Endothelial cell of umbilical vein (primary cell): ENCODE measurements at regions of chr17 and their contacts with region 1.

Region 1: DNA sequence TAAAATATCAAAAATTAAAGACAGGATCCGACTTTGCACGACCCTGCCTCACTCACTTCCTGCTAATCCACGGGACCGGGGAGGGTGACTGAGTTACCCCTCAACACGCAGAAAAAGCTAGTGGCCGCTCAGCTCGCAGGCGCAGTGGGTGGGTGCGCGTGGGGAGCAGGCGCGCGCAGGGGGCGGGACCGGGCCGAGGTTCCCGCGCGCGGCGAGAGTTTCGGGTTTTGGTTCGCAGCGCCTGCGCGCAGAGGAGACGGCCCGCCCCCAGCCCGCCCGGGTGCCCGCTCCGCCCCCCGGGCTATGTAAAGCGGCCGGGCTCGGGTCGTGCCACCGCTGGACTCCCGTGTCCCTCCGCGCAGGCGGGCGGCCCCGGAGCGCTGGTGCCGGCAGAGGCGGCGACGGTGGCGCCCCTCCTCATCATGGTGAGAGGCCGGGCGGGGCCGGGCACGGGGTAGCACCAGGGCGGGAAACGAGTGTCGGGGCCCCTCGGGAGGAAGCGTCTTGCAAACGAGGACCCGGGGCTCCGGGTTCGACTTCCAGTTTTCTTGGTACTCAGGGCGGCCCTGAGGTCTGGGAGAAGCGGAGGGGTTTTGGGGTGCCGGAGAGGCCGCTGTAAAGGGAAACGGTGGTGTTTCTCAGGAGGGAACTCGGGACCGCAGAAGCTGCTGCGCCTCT is at the start of gene CNP:
- DNase-seq: peak; percentile 91
- H3K4me3 ChIP-seq: peak within 1 kb of the TSS; percentile 74 to 93 (median 80)
- H3K27ac ChIP-seq: peak within 1 kb of the TSS; percentile 51
- H3K4me1 ChIP-seq: peaks cover 18% of the 10 kb centered on the region
- H3K27me3 ChIP-seq: no peaks in the 10 kb centered on the region
- CTCF ChIP-seq: no peak
- POLR2A ChIP-seq: peak; percentile 96
- total RNA-seq, gene CNP: 84.9 and 88.3 TPM in 2 replicates

Region 2: GRCh38 chr17:41948762-41949460 is 17.7 kb before region 1 on chr17:
- CTCF ChIA-PET with region 1: interaction called, 14 read pairs
- POLR2A ChIA-PET with region 1: no interaction called
- dilution Hi-C with region 1: no loop called
- intact Hi-C with region 1: no loop called
- DNase-seq: no peak
- H3K4me3 ChIP-seq: no peak overlapping the region
- H3K27ac ChIP-seq: no peak overlapping the region
- H3K4me1 ChIP-seq: no peaks in the 10 kb centered on the region
- H3K27me3 ChIP-seq: no peaks in the 10 kb centered on the region
- CTCF ChIP-seq: no peak
- POLR2A ChIP-seq: no peak

Region 3: DNA sequence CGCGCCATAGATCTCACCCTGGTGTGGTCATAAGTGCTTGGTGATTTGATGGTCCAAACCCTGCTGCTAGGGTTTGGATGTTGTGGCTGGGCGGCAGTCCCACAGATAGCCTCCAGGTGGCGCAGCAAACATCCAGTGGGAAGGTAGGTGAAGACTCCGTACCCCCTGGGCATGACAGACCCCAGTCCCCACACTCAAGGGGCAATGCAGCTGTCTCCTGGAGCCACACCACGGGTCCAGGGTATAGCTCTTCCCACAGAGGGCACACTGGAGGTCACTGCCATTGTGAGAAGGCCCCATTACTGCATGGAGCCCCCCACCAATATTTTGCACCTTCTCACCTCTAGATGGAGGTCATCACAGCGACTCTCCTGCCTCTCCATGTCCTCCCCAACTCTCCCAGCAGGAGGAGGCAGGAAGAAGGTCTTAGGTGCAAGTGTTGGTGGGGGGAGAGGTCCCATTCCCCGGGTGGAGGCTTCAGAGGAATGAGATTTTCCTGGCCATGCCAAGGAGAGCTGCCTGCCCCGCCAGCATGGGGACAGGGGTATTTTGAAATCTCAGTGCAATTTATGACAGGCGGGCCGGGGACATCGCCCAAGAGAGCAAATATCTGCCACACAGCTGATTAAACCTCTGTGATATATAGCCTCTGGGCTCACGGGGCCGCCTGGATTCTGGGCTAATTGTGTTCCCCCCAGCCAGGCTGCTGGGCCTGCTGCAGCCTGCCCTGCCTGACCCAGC is 100.9 kb after region 1 on chr17:
- CTCF ChIA-PET with region 1: interaction called, 14 read pairs
- POLR2A ChIA-PET with region 1: no interaction called
- dilution Hi-C with region 1: no loop called
- intact Hi-C with region 1: no loop called
- DNase-seq: peak; percentile 57
- H3K4me3 ChIP-seq: no peak overlapping the region
- H3K27ac ChIP-seq: no peak overlapping the region
- H3K4me1 ChIP-seq: peaks cover 3% of the 10 kb centered on the region
- H3K27me3 ChIP-seq: peaks cover 0 to 9% of the 10 kb centered on the region in 2 experiments
- CTCF ChIP-seq: peak; percentile 76 to 89
- POLR2A ChIP-seq: no peak

Region 4: GRCh38 chr17:42112552-42113176 is 146.1 kb after region 1 on chr17 and contains the start of gene DHX58:
- CTCF ChIA-PET with region 1: interaction called, 74 read pairs
- POLR2A ChIA-PET with region 1: no interaction called
- dilution Hi-C with region 1: loop called (anchors 25 kb)
- intact Hi-C with region 1: loop called (anchors 1 kb)
- DNase-seq: peak; percentile 88
- H3K4me3 ChIP-seq: peak within 1 kb of the TSS in 2 of 3 experiments; percentile 29 to 31
- H3K27ac ChIP-seq: peak within 1 kb of the TSS; percentile 5
- H3K4me1 ChIP-seq: peaks cover 9% of the 10 kb centered on the region
- H3K27me3 ChIP-seq: no peaks in the 10 kb centered on the region
- CTCF ChIP-seq: no peak
- POLR2A ChIP-seq: peak; percentile 74
- total RNA-seq, gene DHX58: 3.1 and 6.4 TPM in 2 replicates

Region 5: DNA sequence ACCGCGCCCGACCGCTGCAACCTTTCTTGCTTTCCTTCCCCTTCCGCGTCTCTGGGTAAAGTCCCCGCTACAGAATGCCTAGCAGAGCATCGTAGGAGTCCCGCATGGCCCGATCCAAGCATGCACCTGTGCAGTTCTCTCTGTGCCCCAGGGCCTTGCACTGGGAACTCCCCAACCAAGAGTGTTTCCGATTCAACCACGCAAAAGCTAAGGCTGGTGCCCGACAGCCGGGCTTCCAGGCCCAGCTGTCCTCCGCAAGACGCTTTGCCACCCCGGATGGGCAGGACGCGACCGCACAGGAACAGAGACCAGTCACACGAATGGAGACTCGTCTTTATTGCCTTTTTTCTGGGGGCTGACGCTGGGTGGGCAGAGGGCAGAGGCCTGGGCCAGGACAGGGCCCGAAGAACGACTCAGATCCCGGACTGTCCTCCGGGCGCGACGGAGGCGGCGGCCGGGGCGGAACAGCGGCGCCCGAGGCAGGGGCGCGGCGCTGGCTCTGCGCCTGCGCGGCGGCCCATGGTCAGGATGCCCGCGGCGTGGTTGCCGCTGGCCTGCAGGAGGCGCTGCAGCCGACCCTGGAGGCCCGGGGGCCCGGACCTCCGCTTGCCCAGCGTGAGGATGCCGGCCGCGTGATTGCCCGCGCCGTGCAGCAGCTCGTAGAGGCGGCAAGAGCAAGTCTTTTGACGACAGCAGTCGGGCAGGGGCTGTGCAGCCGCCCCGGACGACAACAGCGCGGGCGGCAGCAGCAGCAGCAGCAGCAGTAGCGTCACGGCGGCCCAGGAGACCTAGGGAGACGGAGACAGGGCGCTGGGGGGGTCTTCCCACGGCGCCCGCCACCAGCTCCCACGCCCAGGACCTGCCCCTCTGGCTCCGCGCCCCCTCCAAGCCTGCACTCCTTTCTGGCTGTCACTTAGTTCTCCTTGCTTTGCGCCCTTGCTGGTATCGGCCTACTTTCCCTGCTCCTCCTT is 217.4 kb after region 1 on chr17:
- CTCF ChIA-PET with region 1: interaction called, 5 read pairs
- POLR2A ChIA-PET with region 1: no interaction called
- dilution Hi-C with region 1: no loop called
- intact Hi-C with region 1: loop called (anchors 1 kb)
- DNase-seq: peak; percentile 70
- H3K4me3 ChIP-seq: peak overlapping the region; percentile 35 to 51 (median 45)
- H3K27ac ChIP-seq: peak overlapping the region; percentile 16
- H3K4me1 ChIP-seq: peaks cover 14% of the 10 kb centered on the region
- H3K27me3 ChIP-seq: peaks cover 9 to 13% of the 10 kb centered on the region in 2 experiments
- CTCF ChIP-seq: peak; percentile 86 to 99
- POLR2A ChIP-seq: peak; percentile 38

Region 6: DNA sequence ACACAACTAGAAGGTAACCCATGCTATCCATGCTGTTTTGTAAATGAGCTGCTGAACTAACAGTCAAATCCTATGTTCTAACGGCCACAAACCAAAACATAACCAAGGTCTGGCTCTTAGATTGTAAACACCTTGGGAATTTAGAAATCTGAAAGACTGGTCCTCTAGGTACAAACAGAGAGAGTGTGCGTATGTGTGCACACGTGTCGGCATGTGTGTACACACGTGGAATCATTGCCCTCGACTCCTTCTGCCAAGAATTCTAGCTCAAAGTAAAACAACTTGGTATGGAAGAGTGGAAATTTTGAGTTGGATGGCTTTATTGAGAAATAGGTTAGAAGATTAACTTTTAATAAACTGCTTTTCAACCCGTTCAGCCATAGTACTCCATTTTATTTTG is 245.8 kb after region 1 on chr17:
- CTCF ChIA-PET with region 1: no interaction called
- POLR2A ChIA-PET with region 1: no interaction called
- dilution Hi-C with region 1: no loop called
- intact Hi-C with region 1: no loop called
- DNase-seq: no peak
- H3K4me3 ChIP-seq: no peak overlapping the region
- H3K27ac ChIP-seq: no peak overlapping the region
- H3K4me1 ChIP-seq: no peaks in the 10 kb centered on the region
- H3K27me3 ChIP-seq: no peaks in the 10 kb centered on the region
- CTCF ChIP-seq: no peak
- POLR2A ChIP-seq: no peak